AG04450 (cell line): ENCODE measurements at regions of chr11 and their contacts with region 1.

Region 1: GRCh38 chr11:14308114-14308896 is 50.7 kb downstream of the RRAS2 start:
- DNase-seq: no peak
- H3K4me3 ChIP-seq: no peak overlapping the region
- H3K27ac ChIP-seq: no peak overlapping the region
- H3K27me3 ChIP-seq: no peaks in the 10 kb centered on the region
- CTCF ChIP-seq: peak; percentile 73

Region 2: DNA sequence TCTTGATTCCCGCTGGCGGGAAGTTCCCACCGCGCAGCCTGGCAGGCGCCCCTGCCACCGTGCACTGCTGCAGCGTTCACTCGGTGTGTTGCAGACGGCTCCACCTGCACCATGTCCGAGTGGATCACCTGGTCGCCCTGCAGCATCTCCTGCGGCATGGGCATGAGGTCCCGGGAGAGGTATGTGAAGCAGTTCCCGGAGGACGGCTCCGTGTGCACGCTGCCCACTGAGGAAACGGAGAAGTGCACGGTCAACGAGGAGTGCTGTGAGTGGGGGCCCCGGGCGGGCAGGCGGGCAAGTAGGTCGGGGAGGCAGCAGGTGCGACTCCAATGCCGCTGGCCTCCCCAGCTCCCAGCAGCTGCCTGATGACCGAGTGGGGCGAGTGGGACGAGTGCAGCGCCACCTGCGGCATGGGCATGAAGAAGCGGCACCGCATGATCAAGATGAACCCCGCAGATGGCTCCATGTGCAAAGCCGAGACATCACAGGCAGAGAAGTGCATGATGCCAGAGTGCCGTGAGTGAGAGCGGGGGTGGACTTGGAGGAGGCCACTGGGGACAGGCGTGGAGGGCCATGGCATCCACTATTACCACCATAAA is 49.0 kb before region 1 on chr11:
- CTCF ChIA-PET with region 1: no interaction called
- POLR2A ChIA-PET with region 1: no interaction called
- DNase-seq: no peak
- H3K4me3 ChIP-seq: no peak overlapping the region
- H3K27ac ChIP-seq: no peak overlapping the region
- H3K27me3 ChIP-seq: peaks cover 12% of the 10 kb centered on the region
- CTCF ChIP-seq: no peak

Region 3: GRCh38 chr11:14320020-14320419 is 11.7 kb after region 1 on chr11:
- CTCF ChIA-PET with region 1: interaction called, 17 read pairs
- POLR2A ChIA-PET with region 1: interaction called, 5 read pairs
- DNase-seq: no peak
- H3K4me3 ChIP-seq: no peak overlapping the region
- H3K27ac ChIP-seq: no peak overlapping the region
- H3K27me3 ChIP-seq: no peaks in the 10 kb centered on the region
- CTCF ChIP-seq: no peak